CD14-positive monocyte (primary cell): ENCODE measurements at regions of chr19 and their contacts with region 1.

Region 1: DNA sequence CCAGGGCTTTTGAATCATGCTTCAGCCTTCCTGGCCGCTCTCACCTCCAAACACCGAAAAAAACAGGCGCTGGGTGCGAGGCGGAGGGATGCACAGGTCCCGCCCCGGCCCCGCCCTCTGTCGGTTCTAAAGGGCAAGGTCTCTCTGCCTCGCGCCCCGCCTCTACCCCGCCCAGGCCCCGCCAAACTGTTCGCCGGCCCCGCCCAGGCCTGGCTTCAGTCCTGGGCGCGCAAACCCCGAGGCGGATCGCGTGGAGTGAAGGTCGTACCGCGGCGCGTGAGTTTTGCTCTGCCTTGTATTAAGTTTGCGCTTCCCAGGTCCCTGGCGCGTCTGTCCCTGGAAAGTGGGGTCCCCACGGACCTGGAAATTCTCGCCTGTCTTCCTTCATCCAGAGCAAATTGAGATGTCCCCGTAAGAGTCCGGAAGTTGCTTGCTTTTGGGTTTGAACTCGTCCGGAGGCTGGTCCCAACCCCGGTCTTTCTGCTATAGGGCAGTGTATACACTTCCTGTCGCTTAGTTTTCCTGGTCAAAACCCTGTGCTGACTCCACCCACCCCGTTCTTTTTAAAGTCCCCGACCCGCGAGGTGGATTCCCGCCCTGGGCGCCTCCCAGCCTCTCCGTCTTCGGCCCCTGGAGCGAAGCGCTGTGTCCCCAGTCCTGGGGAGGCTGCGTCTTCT is 8.4 kb downstream of the ZNF808 start:
- DNase-seq: peak; percentile 68 to 80 (median 69)
- H3K4me3 ChIP-seq: peak overlapping the region; percentile 56 to 80 (median 71)
- H3K4me3 Mint-ChIP-seq: peak overlapping the region; percentile 88 to 93
- H3K27ac ChIP-seq: peak overlapping the region; percentile 77 to 88
- H3K27ac Mint-ChIP-seq: peak overlapping the region; percentile 76 to 96 (median 88)
- H3K4me1 ChIP-seq: peaks cover 52 to 61% of the 10 kb centered on the region in 2 donors
- H3K4me1 Mint-ChIP-seq: peaks cover 61% of the 10 kb centered on the region
- H3K27me3 ChIP-seq: no peaks in the 10 kb centered on the region
- H3K27me3 Mint-ChIP-seq: peaks cover 0 to 4% (median 3%) of the 10 kb centered on the region in 3 donors
- CTCF ChIP-seq: peak; percentile 32

Region 2: DNA sequence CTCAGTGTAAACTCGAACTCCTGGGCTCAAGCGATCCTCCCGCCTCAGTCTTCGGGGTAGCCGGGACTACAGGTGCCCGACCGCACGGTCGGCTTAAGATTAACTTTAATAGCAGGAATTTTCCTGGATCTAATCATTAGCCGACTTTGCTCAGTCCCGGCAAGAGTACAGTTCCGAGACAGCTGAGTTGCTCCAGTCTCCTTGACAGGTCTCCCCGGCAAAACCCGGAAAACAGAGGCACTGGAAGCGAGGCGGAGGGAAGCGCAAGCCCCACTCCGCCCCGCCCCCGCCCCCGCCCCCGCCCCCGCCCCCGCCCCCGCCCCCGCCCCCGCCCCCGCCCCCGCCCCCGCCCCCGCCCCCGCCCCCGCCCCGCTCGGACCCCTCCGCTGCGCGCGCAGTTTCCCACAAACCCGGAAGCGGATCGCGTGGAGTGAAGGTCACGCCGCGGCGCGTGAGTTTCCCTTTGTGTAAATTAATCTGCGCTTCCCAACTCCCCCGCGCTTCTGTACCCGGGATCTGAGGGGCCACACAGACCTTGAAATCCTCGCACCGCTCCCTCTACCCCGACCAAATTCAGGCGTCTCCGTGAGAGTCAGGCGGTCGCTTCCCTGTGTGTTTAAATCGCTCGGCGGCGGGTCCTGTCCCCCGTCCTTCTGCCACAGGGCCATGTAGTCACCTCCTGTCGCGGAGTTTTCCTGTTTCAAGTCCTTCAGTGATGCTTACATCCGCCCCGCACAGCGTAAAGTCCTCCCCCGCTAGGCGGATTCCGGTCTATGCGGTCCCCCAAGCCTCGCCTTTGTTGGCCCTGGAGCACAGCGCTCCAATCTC is 238.9 kb before region 1 on chr19 and contains the start of gene ZNF480:
- intact Hi-C with region 1: loop called in 1 of 2 experiments (anchors 5 kb)
- DNase-seq: peak; percentile 80 to 86 (median 82)
- H3K4me3 ChIP-seq: peak within 1 kb of the TSS; percentile 93 to 99 (median 94)
- H3K4me3 Mint-ChIP-seq: peak within 1 kb of the TSS; percentile 95 to 97
- H3K27ac ChIP-seq: peak within 1 kb of the TSS; percentile 88 to 94
- H3K27ac Mint-ChIP-seq: peak within 1 kb of the TSS; percentile 91 to 98 (median 94)
- H3K4me1 ChIP-seq: peaks cover 15 to 18% of the 10 kb centered on the region in 2 donors
- H3K4me1 Mint-ChIP-seq: peaks cover 17% of the 10 kb centered on the region
- H3K27me3 ChIP-seq: no peaks in the 10 kb centered on the region
- H3K27me3 Mint-ChIP-seq: peaks cover 0 to 1% (median 0%) of the 10 kb centered on the region in 3 donors
- CTCF ChIP-seq: no peak
- polyA plus RNA-seq, gene ZNF480: 6.6 to 7.6 (median 7.4) TPM

Region 3: GRCh38 chr19:52734893-52735661 is 199.2 kb after region 1 on chr19 and contains the start of gene ZNF611:
- intact Hi-C with region 1: loop called in 1 of 2 experiments (anchors 5 kb)
- DNase-seq: peak; percentile 91 to 94 (median 93)
- H3K4me3 ChIP-seq: peak within 1 kb of the TSS; percentile 83 to 97 (median 94)
- H3K4me3 Mint-ChIP-seq: peak within 1 kb of the TSS; percentile 85 to 94
- H3K27ac ChIP-seq: peak within 1 kb of the TSS; percentile 80 to 93
- H3K27ac Mint-ChIP-seq: peak within 1 kb of the TSS; percentile 88 to 97 (median 94)
- H3K4me1 ChIP-seq: peaks cover 11 to 19% of the 10 kb centered on the region in 2 donors
- H3K4me1 Mint-ChIP-seq: peaks cover 21% of the 10 kb centered on the region
- H3K27me3 ChIP-seq: no peaks in the 10 kb centered on the region
- H3K27me3 Mint-ChIP-seq: peaks cover 0 to 3% (median 0%) of the 10 kb centered on the region in 3 donors
- CTCF ChIP-seq: peak; percentile 77
- polyA plus RNA-seq, gene ZNF611: 5.5 to 20.2 (median 12.0) TPM